Naive thymus-derived CD4-positive, alpha-beta T cell (primary cell): ENCODE measurements at regions of chr21 and their contacts with region 1.

Region 1: GRCh38 chr21:37771181-37771580 is 145.1 kb downstream of the KCNJ6 start:
- DNase-seq: no peak
- ATAC-seq: no peak
- H3K4me3 ChIP-seq: no peak overlapping the region
- H3K4me3 Mint-ChIP-seq: no peak overlapping the region
- H3K27ac ChIP-seq: no peak overlapping the region
- H3K27ac Mint-ChIP-seq: no peak overlapping the region
- H3K4me1 ChIP-seq: no peaks in the 10 kb centered on the region
- H3K4me1 Mint-ChIP-seq: no peaks in the 10 kb centered on the region
- H3K27me3 ChIP-seq: no peaks in the 10 kb centered on the region
- H3K27me3 Mint-ChIP-seq: peaks cover 3 to 32% (median 13%) of the 10 kb centered on the region in 5 donors

Region 2: GRCh38 chr21:38151021-38151645 is 380.0 kb after region 1 on chr21:
- CTCF ChIA-PET with region 1: no interaction called
- POLR2A ChIA-PET with region 1: no interaction called
- intact Hi-C with region 1: loop called in 1 of 2 experiments (anchors 5 kb)
- DNase-seq: no peak
- ATAC-seq: no peak
- H3K4me3 ChIP-seq: no peak overlapping the region
- H3K4me3 Mint-ChIP-seq: no peak overlapping the region
- H3K27ac ChIP-seq: no peak overlapping the region
- H3K27ac Mint-ChIP-seq: no peak overlapping the region
- H3K4me1 ChIP-seq: no peaks in the 10 kb centered on the region
- H3K4me1 Mint-ChIP-seq: no peaks in the 10 kb centered on the region
- H3K27me3 ChIP-seq: no peaks in the 10 kb centered on the region
- H3K27me3 Mint-ChIP-seq: peaks cover 19 to 53% (median 43%) of the 10 kb centered on the region in 5 donors